Heart right ventricle (tissue), 16 donors: ENCODE measurements at regions of chr20 and their contacts with region 1.

Region 1: GRCh38 chr20:46089417-46090388 is at the start of gene NCOA5:
- DNase-seq: peak; percentile 96 to 97
- ATAC-seq: peak; percentile 95 to 99 (median 98)
- H3K4me3 ChIP-seq: peak within 1 kb of the TSS; percentile 70 to 95 (median 89)
- H3K27ac ChIP-seq: peak within 1 kb of the TSS; percentile 94 to 100 (median 98)
- H3K4me1 ChIP-seq: peaks cover 4 to 53% (median 46%) of the 10 kb centered on the region in 9 donors
- H3K27me3 ChIP-seq: no peaks in the 10 kb centered on the region
- CTCF ChIP-seq: peak in 6 of 9 donors; percentile 33 to 60 (median 50)
- total RNA-seq, gene NCOA5: 10.3 to 22.5 (median 11.6) TPM

Region 2: GRCh38 chr20:45987108-45987780 is 102.5 kb before region 1 on chr20:
- intact Hi-C with region 1: no loop called
- DNase-seq: peak; percentile 43 to 75
- ATAC-seq: peak; percentile 67 to 89 (median 84)
- H3K4me3 ChIP-seq: no peak overlapping the region
- H3K27ac ChIP-seq: no peak overlapping the region
- H3K4me1 ChIP-seq: no peaks in the 10 kb centered on the region
- H3K27me3 ChIP-seq: peaks cover 6 to 64% (median 40%) of the 10 kb centered on the region in 7 donors
- CTCF ChIP-seq: peak; percentile 38 to 93 (median 79)

Region 3: DNA sequence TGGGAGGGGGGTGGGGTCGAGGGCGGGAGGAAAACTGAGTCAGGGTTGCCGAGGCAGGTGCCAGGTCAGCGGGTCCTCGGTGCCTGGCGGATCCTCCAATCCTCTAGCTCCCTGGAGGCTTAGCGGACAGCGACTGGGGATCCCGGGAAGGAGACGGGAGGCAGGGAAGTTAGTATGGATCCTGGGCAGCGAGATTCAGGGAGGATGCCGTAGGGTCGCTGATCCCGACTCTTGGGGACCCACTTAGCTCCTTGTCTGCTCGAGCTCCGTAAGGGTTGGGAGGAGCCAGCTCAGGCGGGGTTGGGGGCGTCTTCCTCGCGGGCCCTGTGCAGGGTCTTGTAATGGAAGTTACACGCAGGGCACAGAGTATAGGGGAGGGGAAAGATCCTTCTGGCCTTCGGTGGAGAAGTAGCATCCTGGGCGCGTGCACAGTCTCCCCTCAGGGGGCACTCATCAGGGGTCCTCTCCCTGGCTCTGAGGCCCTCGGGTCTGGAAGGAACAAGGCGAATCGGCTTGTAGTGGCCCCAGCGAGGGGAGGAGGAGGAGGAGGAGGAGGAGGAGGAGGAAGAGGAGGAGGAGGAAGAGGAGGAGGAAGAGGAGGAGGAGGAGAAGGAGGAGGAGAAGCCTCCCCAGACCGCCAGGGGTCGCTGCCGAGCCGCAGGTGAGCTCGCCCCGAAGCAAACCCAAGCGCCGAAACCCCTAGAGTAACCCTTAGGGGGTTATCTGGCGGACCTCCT is 67.1 kb before region 1 on chr20:
- intact Hi-C with region 1: loop called in 2 of 10 experiments (anchors 5 to 10 kb)
- DNase-seq: peak; percentile 39 to 74
- ATAC-seq: peak; percentile 30 to 76 (median 58)
- H3K4me3 ChIP-seq: peak overlapping the region in 4 of 10 donors; percentile 7 to 52 (median 50)
- H3K27ac ChIP-seq: no peak overlapping the region
- H3K4me1 ChIP-seq: peaks cover 0 to 20% (median 9%) of the 10 kb centered on the region in 9 donors
- H3K27me3 ChIP-seq: peaks cover 14 to 100% (median 92%) of the 10 kb centered on the region in 7 donors
- CTCF ChIP-seq: peak; percentile 41 to 74 (median 68)

Region 4: DNA sequence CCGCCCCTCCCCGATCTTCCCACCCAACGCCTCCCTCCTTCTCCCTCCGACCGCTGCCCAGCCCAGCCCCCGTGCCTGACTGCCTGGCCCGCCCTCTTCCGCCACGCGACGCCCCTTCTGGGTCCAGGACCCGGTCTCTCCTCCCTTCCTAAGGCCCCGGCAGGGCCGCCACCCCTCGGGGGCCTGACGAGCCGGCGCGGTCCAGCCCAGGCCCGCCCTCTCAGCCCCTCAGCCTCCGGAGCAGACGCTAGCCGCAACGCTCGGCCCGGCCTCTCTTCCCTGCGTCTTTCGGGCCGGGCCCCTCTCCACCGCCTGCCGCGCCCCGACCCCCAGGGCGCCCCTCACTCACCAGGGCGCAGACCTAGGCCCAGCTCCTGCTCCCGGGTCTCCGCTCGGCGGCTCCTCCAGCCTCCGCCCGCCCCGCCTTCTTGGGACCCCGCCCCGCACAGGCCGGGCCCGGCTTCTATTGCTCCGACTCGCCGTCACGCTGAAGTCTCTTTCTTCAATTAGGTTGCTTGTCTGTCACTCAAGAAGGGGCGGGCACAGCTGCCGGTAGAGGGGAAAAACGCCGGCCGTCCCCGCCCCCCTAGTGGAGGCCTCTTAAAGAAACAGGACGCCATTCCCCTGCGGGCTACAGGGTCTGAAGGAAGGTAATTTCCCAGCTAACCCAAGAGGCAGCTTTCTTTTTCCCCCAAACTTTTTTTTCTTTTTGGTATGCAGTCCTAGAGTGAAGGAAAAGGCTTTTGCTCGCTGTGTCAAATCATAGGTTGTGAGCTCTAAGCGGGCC is 316.7 kb after region 1 on chr20 and contains the start of gene ELMO2:
- intact Hi-C with region 1: loop called in 1 of 10 experiments (anchors 1 kb)
- DNase-seq: peak; percentile 95 to 99
- ATAC-seq: peak; percentile 93 to 97 (median 95)
- H3K4me3 ChIP-seq: peak within 1 kb of the TSS; percentile 73 to 94 (median 89)
- H3K27ac ChIP-seq: peak within 1 kb of the TSS; percentile 90 to 98 (median 96)
- H3K4me1 ChIP-seq: peaks cover 18 to 63% (median 57%) of the 10 kb centered on the region in 9 donors
- H3K27me3 ChIP-seq: no peaks in the 10 kb centered on the region
- CTCF ChIP-seq: peak in 8 of 9 donors; percentile 8 to 52 (median 31)
- total RNA-seq, gene ELMO2: 23.6 to 46.0 (median 28.9) TPM